ENCODE measurements at regions of chr14 and their contacts with region 1.

Region 1: DNA sequence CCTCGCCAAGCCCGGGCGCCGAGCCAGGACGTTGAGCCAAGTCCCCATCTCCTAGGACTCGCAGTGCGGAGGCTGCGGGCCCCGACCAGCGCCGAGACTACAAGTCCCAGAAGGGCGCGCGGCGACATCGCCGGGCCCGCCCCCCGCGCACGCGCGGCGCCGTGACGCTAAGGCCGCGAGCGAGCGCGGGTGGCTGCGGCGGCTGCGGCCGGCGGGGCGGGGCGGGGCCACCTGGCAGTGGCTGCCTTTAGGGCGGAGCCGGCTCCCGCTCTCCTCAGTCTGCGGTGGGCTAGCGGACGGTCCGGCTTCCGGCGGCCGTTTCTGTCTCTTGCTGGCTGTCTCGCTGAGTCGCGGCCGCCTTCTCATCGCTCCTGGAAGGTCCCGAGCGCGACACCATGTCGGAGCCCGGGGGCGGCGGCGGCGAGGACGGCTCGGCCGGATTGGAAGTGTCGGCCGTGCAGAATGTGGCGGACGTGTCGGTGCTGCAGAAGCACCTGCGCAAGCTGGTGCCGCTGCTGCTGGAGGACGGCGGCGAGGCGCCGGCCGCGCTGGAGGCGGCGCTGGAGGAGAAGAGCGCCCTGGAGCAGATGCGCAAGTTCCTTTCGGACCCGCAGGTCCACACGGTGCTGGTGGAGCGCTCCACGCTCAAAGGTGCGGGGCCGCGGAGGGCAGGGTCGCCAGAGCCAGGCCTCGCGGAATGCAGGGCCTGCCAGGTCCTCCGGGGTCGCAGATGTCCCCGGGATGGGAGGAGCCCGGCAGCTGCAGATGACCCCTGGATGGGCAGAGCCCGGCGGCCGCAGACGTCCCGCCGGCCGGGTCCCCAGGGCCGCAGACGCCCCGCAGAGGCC is at the start of gene DYNC1H1:
- DNase-seq: peak; percentile 80 to 95 (median 88)
- ATAC-seq: peak; percentile 81 to 82
- H3K4me3 Mint-ChIP-seq: peak within 1 kb of the TSS; percentile 83 to 96 (median 90)
- H3K27ac Mint-ChIP-seq: peak within 1 kb of the TSS; percentile 79 to 96 (median 94)
- H3K4me1 Mint-ChIP-seq: peaks cover 22 to 51% (median 44%) of the 10 kb centered on the region in 4 donors
- H3K27me3 Mint-ChIP-seq: no peaks in the 10 kb centered on the region
- polyA plus RNA-seq, gene DYNC1H1: 23.4 to 42.0 (median 30.5) TPM

Region 2: GRCh38 chr14:101947906-101948665 is 16.4 kb before region 1 on chr14:
- POLR2A ChIA-PET with region 1: interaction called, 19 read pairs
- DNase-seq: peak; percentile 96 to 100 (median 100)
- ATAC-seq: peak; percentile 95 to 97
- H3K4me3 Mint-ChIP-seq: peak overlapping the region; percentile 91 to 100 (median 96)
- H3K27ac Mint-ChIP-seq: peak overlapping the region; percentile 97 to 100 (median 100)
- H3K4me1 Mint-ChIP-seq: peaks cover 17 to 37% (median 30%) of the 10 kb centered on the region in 4 donors
- H3K27me3 Mint-ChIP-seq: peaks cover 10 to 37% (median 29%) of the 10 kb centered on the region in 5 donors

Region 3: DNA sequence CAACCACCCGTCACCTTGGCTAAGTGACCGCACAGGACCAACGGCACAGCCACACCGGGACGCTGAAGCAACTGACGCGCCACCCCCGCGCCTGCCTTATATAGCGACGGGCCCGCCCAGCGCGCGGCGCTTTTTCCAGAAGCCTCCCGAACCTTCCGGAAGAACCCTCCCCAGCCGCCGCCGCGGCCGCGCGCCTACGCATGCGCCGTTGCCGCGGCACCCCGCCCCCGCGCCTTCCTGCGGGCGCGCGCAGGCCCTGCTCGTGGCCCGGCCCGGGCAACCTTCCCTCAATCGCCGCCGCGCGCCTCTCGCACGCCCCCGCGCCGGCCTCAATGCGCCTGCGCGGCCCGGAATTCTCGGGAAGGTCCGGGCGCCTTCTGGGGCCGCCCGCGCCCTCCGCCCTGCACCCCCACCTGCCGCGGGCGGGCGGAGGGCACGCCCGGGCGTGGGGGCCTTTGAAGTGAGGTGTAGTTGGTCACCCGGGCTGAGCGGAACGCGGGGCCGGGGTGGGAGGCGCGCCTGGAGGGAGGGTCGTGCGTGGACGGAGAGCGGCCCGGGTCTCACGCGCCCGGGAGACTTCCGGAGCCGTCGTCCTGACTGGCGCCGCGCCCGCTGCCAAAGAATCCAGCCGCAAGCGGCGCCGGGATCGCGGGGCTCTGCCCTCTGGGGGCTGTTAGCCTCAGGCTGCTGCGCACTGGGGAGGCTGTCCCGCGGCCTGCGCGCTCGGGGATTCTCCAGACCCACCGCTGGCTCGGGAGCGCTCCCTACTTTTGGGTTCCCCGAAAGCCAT is 122.6 kb after region 1 on chr14 and contains the start of gene HSP90AA1:
- POLR2A ChIA-PET with region 1: interaction called, 12 read pairs
- DNase-seq: peak; percentile 89 to 97 (median 94)
- ATAC-seq: peak; percentile 66 to 79
- H3K4me3 Mint-ChIP-seq: peak within 1 kb of the TSS; percentile 90 to 98 (median 97)
- H3K27ac Mint-ChIP-seq: peak within 1 kb of the TSS; percentile 92 to 100 (median 98)
- H3K4me1 Mint-ChIP-seq: peaks cover 31 to 64% (median 63%) of the 10 kb centered on the region in 4 donors
- H3K27me3 Mint-ChIP-seq: no peaks in the 10 kb centered on the region
- polyA plus RNA-seq, gene HSP90AA1: 401 to 445 (median 427) TPM

Measured in naive thymus-derived CD8-positive, alpha-beta T cell (primary cell).